Heart right ventricle (tissue), 16 donors: ENCODE measurements at regions of chr10 and their contacts with region 1.

Region 1: DNA sequence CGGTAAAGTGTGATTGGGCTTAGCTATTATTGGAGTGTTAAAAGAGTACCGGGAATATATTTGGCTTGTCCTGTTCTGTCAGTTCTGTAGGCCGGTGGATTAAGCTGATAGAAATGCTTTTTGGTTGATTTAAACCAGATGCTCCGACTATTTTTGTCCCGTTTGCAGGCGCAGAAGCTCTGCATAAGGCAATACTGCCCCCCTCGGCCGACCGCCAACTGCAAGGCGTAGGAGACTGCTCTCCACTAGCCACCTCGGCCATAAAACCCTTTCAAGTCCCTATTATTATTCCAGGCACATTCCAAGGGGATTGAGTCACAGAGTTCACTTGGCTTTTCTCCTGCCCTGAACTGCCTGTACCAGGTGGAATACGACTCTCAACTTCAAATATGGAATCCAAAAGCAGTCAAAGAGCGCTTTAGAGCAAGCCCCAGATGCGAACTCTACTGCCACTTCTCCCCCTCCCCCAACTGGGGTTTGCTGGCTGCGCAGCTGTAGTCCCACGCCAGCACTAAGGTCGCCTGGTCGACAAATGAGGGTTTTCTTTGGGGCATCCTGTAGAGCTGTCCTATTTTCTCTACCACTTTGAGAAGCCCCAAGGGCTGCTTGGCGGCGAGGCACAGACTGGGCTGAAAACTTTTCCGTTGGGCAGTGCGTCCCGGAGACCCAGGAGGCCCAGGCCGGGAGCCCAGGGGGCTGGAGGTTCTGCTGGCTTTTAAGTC is 108.3 kb downstream of the REEP3 start:
- DNase-seq: peak; percentile 95 to 98
- ATAC-seq: peak; percentile 72 to 91 (median 84)
- H3K4me3 ChIP-seq: peak overlapping the region; percentile 30 to 74 (median 62)
- H3K27ac ChIP-seq: peak overlapping the region; percentile 78 to 100 (median 98)
- H3K4me1 ChIP-seq: peaks cover 0 to 43% (median 35%) of the 10 kb centered on the region in 9 donors
- H3K27me3 ChIP-seq: no peaks in the 10 kb centered on the region
- CTCF ChIP-seq: peak; percentile 59 to 91 (median 79)

Region 2: GRCh38 chr10:63166742-63167258 is 462.7 kb before region 1 on chr10:
- intact Hi-C with region 1: loop called in 9 of 10 experiments (anchors 2 to 10 kb)
- DNase-seq: peak in 1 of 2 donors; percentile 61
- ATAC-seq: peak in 7 of 8 donors; percentile 56 to 71 (median 66)
- H3K4me3 ChIP-seq: no peak overlapping the region
- H3K27ac ChIP-seq: no peak overlapping the region
- H3K4me1 ChIP-seq: peaks cover 0 to 39% (median 20%) of the 10 kb centered on the region in 9 donors
- H3K27me3 ChIP-seq: no peaks in the 10 kb centered on the region
- CTCF ChIP-seq: peak; percentile 41 to 91 (median 87)

Region 3: GRCh38 chr10:63217120-63217605 is 412.4 kb before region 1 on chr10:
- intact Hi-C with region 1: loop called in 7 of 10 experiments (anchors 5 to 10 kb)
- DNase-seq: peak in 1 of 2 donors; percentile 30
- ATAC-seq: peak; percentile 62 to 82 (median 77)
- H3K4me3 ChIP-seq: no peak overlapping the region
- H3K27ac ChIP-seq: peak overlapping the region in 4 of 10 donors; percentile 1 to 40 (median 14)
- H3K4me1 ChIP-seq: peaks cover 0 to 63% (median 43%) of the 10 kb centered on the region in 9 donors
- H3K27me3 ChIP-seq: no peaks in the 10 kb centered on the region
- CTCF ChIP-seq: peak; percentile 46 to 86 (median 70)

Region 4: GRCh38 chr10:63297941-63298340 is 331.6 kb before region 1 on chr10:
- intact Hi-C with region 1: no loop called
- DNase-seq: no peak
- ATAC-seq: peak in 4 of 8 donors; percentile 17 to 47 (median 33)
- H3K4me3 ChIP-seq: no peak overlapping the region
- H3K27ac ChIP-seq: no peak overlapping the region
- H3K4me1 ChIP-seq: peaks cover 0 to 44% (median 15%) of the 10 kb centered on the region in 9 donors
- H3K27me3 ChIP-seq: no peaks in the 10 kb centered on the region
- CTCF ChIP-seq: no peak

Region 5: DNA sequence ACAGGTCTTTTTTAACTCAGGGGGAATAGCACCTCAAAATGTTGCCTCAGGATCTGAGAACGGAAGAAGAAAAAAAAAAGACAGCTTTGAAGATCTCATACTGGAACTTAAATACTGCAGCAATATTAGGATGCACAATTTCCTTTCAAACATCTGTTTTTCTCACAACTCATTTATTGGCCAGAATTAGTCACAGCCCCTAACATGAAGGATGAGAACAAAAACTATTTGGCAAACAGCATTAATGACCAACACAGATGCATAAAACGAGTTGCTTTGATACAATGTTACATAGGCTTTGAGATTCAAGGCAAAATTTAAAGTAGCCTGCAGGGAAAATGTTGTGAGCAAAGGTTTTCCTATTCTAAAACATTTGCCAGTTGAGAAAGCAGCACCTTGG is 200.2 kb before region 1 on chr10:
- intact Hi-C with region 1: loop called in 1 of 10 experiments (anchors 5 kb)
- DNase-seq: no peak
- ATAC-seq: peak in 7 of 8 donors; percentile 38 to 79 (median 68)
- H3K4me3 ChIP-seq: peak overlapping the region in 1 of 10 donors; percentile 8
- H3K27ac ChIP-seq: peak overlapping the region in 8 of 10 donors; percentile 11 to 61 (median 43)
- H3K4me1 ChIP-seq: peaks cover 2 to 76% (median 53%) of the 10 kb centered on the region in 9 donors
- H3K27me3 ChIP-seq: no peaks in the 10 kb centered on the region
- CTCF ChIP-seq: no peak

Region 6: GRCh38 chr10:63446716-63447440 is 182.6 kb before region 1 on chr10:
- intact Hi-C with region 1: no loop called
- DNase-seq: no peak
- ATAC-seq: no peak
- H3K4me3 ChIP-seq: no peak overlapping the region
- H3K27ac ChIP-seq: no peak overlapping the region
- H3K4me1 ChIP-seq: peaks cover 0 to 39% (median 14%) of the 10 kb centered on the region in 9 donors
- H3K27me3 ChIP-seq: no peaks in the 10 kb centered on the region
- CTCF ChIP-seq: no peak

Region 7: GRCh38 chr10:63521416-63522276 is 107.9 kb before region 1 on chr10:
- intact Hi-C with region 1: loop called in 7 of 10 experiments (anchors 1 to 10 kb)
- DNase-seq: peak; percentile 68 to 72
- ATAC-seq: peak; percentile 70 to 91 (median 86)
- H3K4me3 ChIP-seq: peak overlapping the region; percentile 51 to 91 (median 80)
- H3K27ac ChIP-seq: peak overlapping the region; percentile 97 to 99 (median 99)
- H3K4me1 ChIP-seq: peaks cover 0 to 80% (median 58%) of the 10 kb centered on the region in 9 donors
- H3K27me3 ChIP-seq: no peaks in the 10 kb centered on the region
- CTCF ChIP-seq: no peak

Region 8: DNA sequence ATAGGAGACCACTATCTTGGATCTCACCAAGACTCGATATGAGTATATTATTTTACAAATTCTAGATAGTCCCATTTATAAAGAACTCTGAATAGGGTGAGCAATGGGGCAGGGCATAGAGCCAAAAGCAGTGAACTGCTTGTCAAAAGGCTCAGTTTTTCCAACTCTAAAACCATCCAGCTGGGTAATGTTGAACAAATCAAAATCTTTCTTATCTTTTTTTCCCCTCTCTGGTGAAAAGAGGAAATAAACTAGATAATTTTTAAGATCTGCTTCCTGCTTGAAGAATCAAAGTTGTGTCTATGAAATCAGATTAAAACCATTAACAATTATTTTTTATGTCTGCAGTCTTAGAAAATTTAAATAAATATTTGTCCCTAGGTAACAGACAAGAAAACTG is 70.3 kb after region 1 on chr10:
- intact Hi-C with region 1: loop called in 1 of 10 experiments (anchors 5 kb)
- DNase-seq: peak in 1 of 2 donors; percentile 57
- ATAC-seq: peak; percentile 23 to 74 (median 44)
- H3K4me3 ChIP-seq: no peak overlapping the region
- H3K27ac ChIP-seq: peak overlapping the region in 9 of 10 donors; percentile 38 to 87 (median 81)
- H3K4me1 ChIP-seq: peaks cover 10 to 67% (median 32%) of the 10 kb centered on the region in 9 donors
- H3K27me3 ChIP-seq: no peaks in the 10 kb centered on the region
- CTCF ChIP-seq: no peak

Region 9: GRCh38 chr10:63720072-63720537 is 90.6 kb after region 1 on chr10:
- intact Hi-C with region 1: loop called in 1 of 10 experiments (anchors 5 kb)
- DNase-seq: peak in 1 of 2 donors; percentile 39
- ATAC-seq: peak in 6 of 8 donors; percentile 22 to 53 (median 35)
- H3K4me3 ChIP-seq: no peak overlapping the region
- H3K27ac ChIP-seq: peak overlapping the region in 5 of 10 donors; percentile 33 to 66 (median 41)
- H3K4me1 ChIP-seq: peaks cover 0 to 39% (median 18%) of the 10 kb centered on the region in 9 donors
- H3K27me3 ChIP-seq: no peaks in the 10 kb centered on the region
- CTCF ChIP-seq: peak; percentile 95 to 99 (median 98)